Activated CD4-positive, alpha-beta memory T cell treated with anti-CD3 and anti-CD28 coated beads for 36 hours (primary cell): ENCODE measurements at regions of chr5 and their contacts with region 1.

Region 1: GRCh38 chr5:154072414-154073171 is 33.8 kb downstream of the MFAP3 start:
- DNase-seq: peak; percentile 89
- H3K4me3 Mint-ChIP-seq: no peak overlapping the region
- H3K27ac Mint-ChIP-seq: no peak overlapping the region
- H3K4me1 Mint-ChIP-seq: peaks cover 8% of the 10 kb centered on the region
- H3K27me3 Mint-ChIP-seq: no peaks in the 10 kb centered on the region

Region 2: DNA sequence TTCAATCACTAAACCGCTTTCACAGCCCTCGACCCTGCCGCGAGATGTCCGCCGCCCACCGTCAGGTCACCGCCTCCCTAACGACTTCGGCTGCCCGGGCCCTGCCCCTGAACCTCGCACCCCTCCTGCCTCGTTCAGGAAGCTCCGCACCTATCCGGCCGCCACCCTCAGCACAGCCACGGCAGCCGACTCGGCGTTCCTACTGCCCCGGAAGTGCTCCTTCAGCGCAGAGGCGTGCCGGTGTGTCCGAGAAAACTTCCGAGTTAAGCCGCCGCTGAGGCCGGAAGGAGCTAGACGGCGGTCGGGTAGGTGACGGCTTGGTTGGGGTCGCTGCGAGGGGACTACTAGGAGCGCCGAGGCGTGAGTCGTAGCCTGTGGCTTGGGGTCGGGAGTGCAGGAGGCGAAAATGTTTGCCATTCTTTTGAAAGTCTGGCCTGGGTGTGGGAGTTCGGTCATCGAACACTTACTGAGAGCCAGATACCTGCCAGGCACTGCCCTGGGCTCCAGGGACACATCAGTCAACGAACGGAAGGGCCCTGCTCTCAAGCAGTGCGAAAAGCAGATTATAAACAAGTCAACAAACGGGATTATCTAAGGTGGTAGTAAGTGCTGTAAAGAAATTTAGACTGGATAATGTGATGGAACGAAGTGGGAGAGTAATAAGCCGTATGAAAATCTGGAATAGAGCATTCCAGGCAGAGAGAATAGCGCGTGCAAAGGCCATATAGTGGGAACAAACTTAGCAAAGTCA is 33.7 kb before region 1 on chr5 and contains the starts of genes FAM114A2 and MFAP3:
- CTCF ChIA-PET with region 1: interaction called, 11 read pairs
- POLR2A ChIA-PET with region 1: interaction called, 3 read pairs
- intact Hi-C with region 1: no loop called
- DNase-seq: peak; percentile 93
- H3K4me3 Mint-ChIP-seq: peak within 1 kb of the TSS; percentile 98
- H3K27ac Mint-ChIP-seq: peak within 1 kb of the TSS; percentile 93
- H3K4me1 Mint-ChIP-seq: peaks cover 47% of the 10 kb centered on the region
- H3K27me3 Mint-ChIP-seq: no peaks in the 10 kb centered on the region
- total RNA-seq, gene FAM114A2: 27.4 to 27.8 TPM
- total RNA-seq, gene MFAP3: 10.0 to 11.1 TPM

Region 3: GRCh38 chr5:154189819-154190594 is 117.4 kb after region 1 on chr5:
- CTCF ChIA-PET with region 1: interaction called, 60 read pairs
- POLR2A ChIA-PET with region 1: interaction called, 5 read pairs
- intact Hi-C with region 1: loop called (anchors 5 kb)
- DNase-seq: peak; percentile 83
- H3K4me3 Mint-ChIP-seq: peak overlapping the region; percentile 80
- H3K27ac Mint-ChIP-seq: peak overlapping the region; percentile 55
- H3K4me1 Mint-ChIP-seq: peaks cover 39% of the 10 kb centered on the region
- H3K27me3 Mint-ChIP-seq: peaks cover 5% of the 10 kb centered on the region

Region 4: DNA sequence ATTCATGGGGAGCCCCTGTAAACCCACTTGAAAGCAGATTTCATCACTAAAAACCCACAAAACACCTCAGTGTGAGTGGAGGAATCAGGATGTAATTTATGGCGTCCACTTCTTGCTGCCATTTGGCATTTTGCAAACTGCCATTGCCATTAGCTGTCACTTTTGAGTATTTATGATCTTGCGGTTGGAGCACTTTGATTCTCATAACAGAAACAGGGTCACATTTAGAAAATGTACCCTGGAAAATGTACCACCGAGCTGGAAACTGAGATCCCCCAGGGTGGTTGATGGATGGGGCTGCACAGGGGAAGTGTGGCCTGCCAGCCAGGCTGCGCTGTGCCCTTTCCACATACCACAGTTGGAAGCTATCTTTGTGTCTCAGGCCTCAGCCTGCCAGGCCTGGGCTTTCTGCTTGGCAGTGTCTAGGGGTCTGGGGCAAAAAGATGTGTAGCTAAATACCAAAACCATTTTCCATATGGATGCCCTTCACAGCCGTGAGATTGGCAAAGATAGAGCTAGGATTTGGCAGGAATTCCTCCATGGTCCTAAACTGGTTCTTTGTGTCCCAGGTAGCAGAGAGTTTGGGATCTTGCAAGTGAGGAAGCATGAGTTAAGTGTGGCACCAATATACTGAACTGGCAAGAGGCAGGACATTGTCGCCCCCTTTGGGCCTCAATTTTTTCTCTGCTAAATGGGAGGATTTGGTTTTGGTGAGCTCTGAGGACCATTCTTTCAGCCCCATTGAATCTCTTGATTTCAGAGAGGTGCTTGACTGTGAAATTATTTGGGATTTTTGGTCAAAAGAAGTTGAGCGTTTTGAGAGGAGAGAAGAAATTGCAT is 164.2 kb after region 1 on chr5:
- CTCF ChIA-PET with region 1: interaction called, 15 read pairs
- POLR2A ChIA-PET with region 1: no interaction called
- intact Hi-C with region 1: loop called (anchors 1 kb)
- DNase-seq: peak; percentile 33
- H3K4me3 Mint-ChIP-seq: no peak overlapping the region
- H3K27ac Mint-ChIP-seq: no peak overlapping the region
- H3K4me1 Mint-ChIP-seq: peaks cover 27% of the 10 kb centered on the region
- H3K27me3 Mint-ChIP-seq: no peaks in the 10 kb centered on the region

Region 5: GRCh38 chr5:154445422-154446182 is 373.0 kb after region 1 on chr5 and contains the start of gene SAP30L:
- CTCF ChIA-PET with region 1: interaction called, 5 read pairs
- POLR2A ChIA-PET with region 1: no interaction called
- intact Hi-C with region 1: loop called (anchors 2 kb)
- DNase-seq: peak; percentile 97
- H3K4me3 Mint-ChIP-seq: peak within 1 kb of the TSS; percentile 99
- H3K27ac Mint-ChIP-seq: peak within 1 kb of the TSS; percentile 94
- H3K4me1 Mint-ChIP-seq: peaks cover 45% of the 10 kb centered on the region
- H3K27me3 Mint-ChIP-seq: no peaks in the 10 kb centered on the region
- total RNA-seq, gene SAP30L: 32.0 to 34.2 TPM